IMR-90 (cell line): ENCODE measurements at regions of chr12 and their contacts with region 1.

Region 1: GRCh38 chr12:61860451-61860850 is 399.8 kb upstream of the USP15 start:
- DNase-seq: no peak
- ATAC-seq: no peak
- H3K4me3 ChIP-seq: no peak overlapping the region
- H3K27ac ChIP-seq: no peak overlapping the region
- H3K4me1 ChIP-seq: no peaks in the 10 kb centered on the region
- H3K27me3 ChIP-seq: no peaks in the 10 kb centered on the region
- CTCF ChIP-seq: no peak
- POLR2A ChIP-seq: no peak
- RAD21 ChIP-seq: no peak

Region 2: DNA sequence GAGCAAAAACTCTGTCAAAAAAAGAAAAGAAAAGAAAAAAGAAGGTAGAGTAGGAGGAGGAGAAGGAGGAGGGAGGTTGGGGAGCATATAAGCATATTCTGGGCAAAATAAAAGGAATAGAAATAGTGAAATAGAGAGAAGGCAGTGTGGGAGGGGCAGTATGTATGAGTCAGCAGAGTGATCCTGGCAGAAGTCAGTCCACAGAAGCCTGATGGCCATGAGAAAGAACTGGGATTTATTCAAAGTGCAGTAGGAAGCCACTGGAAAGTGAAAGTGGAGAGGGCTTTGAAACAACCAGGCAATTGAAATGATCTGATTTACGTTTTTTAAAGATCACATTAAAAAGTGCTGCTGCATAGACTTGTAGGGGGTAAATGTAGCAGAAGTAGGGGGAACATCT is 31.2 kb after region 1 on chr12:
- CTCF ChIA-PET with region 1: no interaction called
- POLR2A ChIA-PET with region 1: no interaction called
- dilution Hi-C with region 1: no loop called
- in situ Hi-C with region 1: no loop called
- intact Hi-C with region 1: no loop called
- DNase-seq: no peak
- ATAC-seq: no peak
- H3K4me3 ChIP-seq: no peak overlapping the region
- H3K27ac ChIP-seq: no peak overlapping the region
- H3K4me1 ChIP-seq: no peaks in the 10 kb centered on the region
- H3K27me3 ChIP-seq: no peaks in the 10 kb centered on the region
- CTCF ChIP-seq: no peak
- POLR2A ChIP-seq: no peak
- RAD21 ChIP-seq: no peak

Region 3: DNA sequence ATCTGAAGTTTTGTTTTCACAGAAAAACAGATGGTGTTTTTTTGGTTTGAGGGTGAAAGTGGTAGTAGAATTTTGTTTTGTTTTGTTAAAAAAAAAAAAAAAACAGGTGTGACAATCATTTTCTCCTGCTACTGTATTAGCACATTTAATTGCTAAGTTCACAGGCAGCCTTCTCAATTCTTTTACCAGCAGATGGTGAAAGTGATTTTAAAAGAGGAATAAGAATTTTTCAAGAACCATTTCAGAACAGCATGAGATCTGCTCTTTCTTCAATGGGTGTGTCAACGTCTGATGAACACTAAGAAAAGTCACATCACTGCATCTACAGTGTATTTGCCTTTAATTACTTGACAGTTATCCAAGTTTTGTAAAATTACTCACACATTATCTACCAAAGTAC is 96.1 kb after region 1 on chr12:
- CTCF ChIA-PET with region 1: no interaction called
- POLR2A ChIA-PET with region 1: no interaction called
- dilution Hi-C with region 1: no loop called
- in situ Hi-C with region 1: no loop called
- intact Hi-C with region 1: no loop called
- DNase-seq: no peak
- ATAC-seq: no peak
- H3K4me3 ChIP-seq: no peak overlapping the region
- H3K27ac ChIP-seq: no peak overlapping the region
- H3K4me1 ChIP-seq: no peaks in the 10 kb centered on the region
- H3K27me3 ChIP-seq: no peaks in the 10 kb centered on the region
- CTCF ChIP-seq: no peak
- POLR2A ChIP-seq: no peak
- RAD21 ChIP-seq: no peak

Region 4: GRCh38 chr12:62484233-62484632 is 623.8 kb after region 1 on chr12:
- CTCF ChIA-PET with region 1: no interaction called
- POLR2A ChIA-PET with region 1: no interaction called
- dilution Hi-C with region 1: no loop called
- in situ Hi-C with region 1: no loop called
- intact Hi-C with region 1: loop called (anchors 5 kb)
- DNase-seq: no peak
- ATAC-seq: no peak
- H3K4me3 ChIP-seq: no peak overlapping the region
- H3K27ac ChIP-seq: no peak overlapping the region
- H3K4me1 ChIP-seq: no peaks in the 10 kb centered on the region
- H3K27me3 ChIP-seq: no peaks in the 10 kb centered on the region
- CTCF ChIP-seq: no peak
- POLR2A ChIP-seq: no peak
- RAD21 ChIP-seq: no peak